ENCODE measurements at regions of chr9 and their contacts with region 1.

Region 1: GRCh38 chr9:122991370-122991830 is 42.1 kb upstream of the GPR21 start:
- DNase-seq: peak; percentile 63
- H3K4me3 ChIP-seq: no peak overlapping the region
- CTCF ChIP-seq: peak; percentile 34

Region 2: DNA sequence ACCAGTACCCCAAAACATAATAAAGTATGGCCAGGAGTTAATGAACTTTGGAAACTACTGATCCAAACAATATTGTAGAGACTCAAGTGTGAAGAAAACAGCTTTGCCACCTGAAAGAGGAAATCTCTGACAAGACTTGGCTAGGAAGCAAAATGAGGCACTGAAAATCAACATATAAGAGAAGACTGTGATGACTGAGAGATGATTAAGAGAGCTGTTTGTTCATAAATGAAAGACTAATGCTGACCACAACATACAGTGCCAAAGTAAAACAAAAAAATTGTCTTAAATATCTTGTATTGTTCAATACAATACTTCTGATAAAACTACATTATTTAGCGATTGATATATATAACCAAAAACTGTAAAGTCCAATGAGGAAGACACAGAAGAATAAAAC is 93.4 kb before region 1 on chr9:
- CTCF ChIA-PET with region 1: interaction called, 13 read pairs
- POLR2A ChIA-PET with region 1: no interaction called
- DNase-seq: no peak
- H3K4me3 ChIP-seq: no peak overlapping the region
- CTCF ChIP-seq: no peak

Region 3: GRCh38 chr9:122975196-122975595 is 16.2 kb before region 1 on chr9:
- CTCF ChIA-PET with region 1: interaction called, 10 read pairs
- POLR2A ChIA-PET with region 1: no interaction called
- DNase-seq: no peak
- H3K4me3 ChIP-seq: no peak overlapping the region
- CTCF ChIP-seq: no peak

Measured in AG04449 (cell line).